Mammary epithelial cell (primary cell): ENCODE measurements at regions of chr20 and their contacts with region 1.

Region 1: GRCh38 chr20:33373735-33374605 is 27.3 kb downstream of the CDK5RAP1 start:
- DNase-seq: peak; percentile 46
- H3K4me3 ChIP-seq: no peak overlapping the region
- H3K27ac ChIP-seq: peak overlapping the region; percentile 77
- H3K4me1 ChIP-seq: peaks cover 26% of the 10 kb centered on the region
- H3K27me3 ChIP-seq: no peaks in the 10 kb centered on the region
- CTCF ChIP-seq: no peak

Region 2: GRCh38 chr20:33387177-33387576 is 13.2 kb after region 1 on chr20:
- CTCF ChIA-PET with region 1: no interaction called
- dilution Hi-C with region 1: no loop called
- in situ Hi-C with region 1: no loop called
- intact Hi-C with region 1: loop called (anchors 2 kb)
- DNase-seq: peak; percentile 71
- H3K4me3 ChIP-seq: no peak overlapping the region
- H3K27ac ChIP-seq: peak overlapping the region; percentile 29
- H3K4me1 ChIP-seq: peaks cover 9% of the 10 kb centered on the region
- H3K27me3 ChIP-seq: no peaks in the 10 kb centered on the region
- CTCF ChIP-seq: no peak